Heart right ventricle (tissue), 16 donors: ENCODE measurements at regions of chr12 and their contacts with region 1.

Region 1: DNA sequence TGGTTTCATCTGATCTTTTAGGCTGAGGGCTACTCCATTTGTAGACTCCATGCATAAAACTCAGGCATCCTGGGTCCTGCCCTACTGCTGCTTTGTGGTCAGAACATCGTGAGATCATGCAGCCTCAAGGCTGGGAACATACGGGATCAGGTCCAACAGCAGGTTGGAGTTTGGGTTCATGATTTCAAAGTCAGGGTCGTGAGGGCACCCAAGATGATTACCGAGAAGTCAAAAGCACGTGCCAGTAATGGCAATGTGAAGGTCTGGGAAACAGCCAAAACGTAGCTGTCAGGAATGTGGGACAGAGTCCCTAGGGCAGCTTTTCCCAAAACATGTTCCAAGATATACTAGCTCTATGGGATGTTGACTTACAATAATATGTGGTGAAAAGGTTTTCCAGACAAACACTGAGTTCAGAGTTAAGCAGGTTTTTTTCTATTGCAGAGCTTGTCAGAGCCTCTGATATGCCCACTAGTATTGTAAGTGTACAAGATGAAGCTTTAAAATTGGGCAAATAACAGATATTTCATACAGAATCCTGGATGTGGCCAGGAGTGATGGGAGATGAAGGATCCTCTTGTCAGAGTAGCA is 130.3 kb upstream of the DNM1L start:
- DNase-seq: peak in 1 of 2 donors; percentile 61
- ATAC-seq: peak; percentile 37 to 83 (median 66)
- H3K4me3 ChIP-seq: peak overlapping the region in 3 of 10 donors; percentile 2 to 36 (median 18)
- H3K27ac ChIP-seq: peak overlapping the region; percentile 14 to 85 (median 80)
- H3K4me1 ChIP-seq: peaks cover 23 to 91% (median 66%) of the 10 kb centered on the region in 9 donors
- H3K27me3 ChIP-seq: no peaks in the 10 kb centered on the region
- CTCF ChIP-seq: no peak

Region 2: GRCh38 chr12:32467959-32468863 is 80.6 kb before region 1 on chr12:
- intact Hi-C with region 1: loop called in 1 of 10 experiments (anchors 10 kb)
- DNase-seq: peak in 1 of 2 donors; percentile 25
- ATAC-seq: peak; percentile 34 to 82 (median 58)
- H3K4me3 ChIP-seq: no peak overlapping the region
- H3K27ac ChIP-seq: peak overlapping the region in 9 of 10 donors; percentile 28 to 83 (median 68)
- H3K4me1 ChIP-seq: peaks cover 5 to 28% (median 14%) of the 10 kb centered on the region in 9 donors
- H3K27me3 ChIP-seq: no peaks in the 10 kb centered on the region
- CTCF ChIP-seq: no peak

Region 3: GRCh38 chr12:32836710-32837109 is 287.9 kb after region 1 on chr12:
- intact Hi-C with region 1: no loop called
- DNase-seq: no peak
- ATAC-seq: peak in 2 of 8 donors; percentile 44 to 47
- H3K4me3 ChIP-seq: no peak overlapping the region
- H3K27ac ChIP-seq: peak overlapping the region in 4 of 10 donors; percentile 4 to 53 (median 30)
- H3K4me1 ChIP-seq: peaks cover 0 to 41% (median 0%) of the 10 kb centered on the region in 9 donors
- H3K27me3 ChIP-seq: no peaks in the 10 kb centered on the region
- CTCF ChIP-seq: no peak